HepG2 (cell line): ENCODE measurements at regions of chr12 and their contacts with region 1.

Region 1: DNA sequence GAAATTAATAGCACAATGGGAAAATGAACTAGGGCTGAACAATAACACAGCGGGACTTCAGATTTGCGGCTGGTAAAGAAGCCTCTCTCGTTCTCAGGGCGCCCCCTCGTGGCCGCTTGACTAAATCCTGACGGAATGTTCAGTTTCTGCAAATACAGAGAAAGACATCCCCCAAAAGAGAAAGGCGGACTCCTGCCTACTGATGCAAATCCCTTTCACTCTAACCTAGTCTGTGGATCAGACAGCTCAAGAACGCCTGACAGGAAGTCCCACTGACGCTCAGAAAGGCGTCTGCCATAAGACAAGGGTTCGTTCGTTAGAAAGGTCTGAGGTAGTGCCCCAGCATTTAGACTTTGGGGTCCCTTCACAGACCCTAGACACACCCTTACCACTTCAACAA is 2.5 kb downstream of the NUAK1 start:
- DNase-seq: peak; percentile 73
- ATAC-seq: no peak
- H3K4me3 ChIP-seq: peak overlapping the region in 1 of 3 experiments; percentile 31; a peak in 3 of 6 replicates
- H3K27ac ChIP-seq: no peak overlapping the region
- H3K4me1 ChIP-seq: peaks cover 79% of the 10 kb centered on the region
- H3K27me3 ChIP-seq: peaks cover 0 to 13% of the 10 kb centered on the region in 2 experiments; a peak in 2 of 5 replicates
- CTCF ChIP-seq: peak; percentile 87
- EP300 ChIP-seq: no peak
- POLR2A ChIP-seq: no peak
- RAD21 ChIP-seq: peak; percentile 89

Region 2: DNA sequence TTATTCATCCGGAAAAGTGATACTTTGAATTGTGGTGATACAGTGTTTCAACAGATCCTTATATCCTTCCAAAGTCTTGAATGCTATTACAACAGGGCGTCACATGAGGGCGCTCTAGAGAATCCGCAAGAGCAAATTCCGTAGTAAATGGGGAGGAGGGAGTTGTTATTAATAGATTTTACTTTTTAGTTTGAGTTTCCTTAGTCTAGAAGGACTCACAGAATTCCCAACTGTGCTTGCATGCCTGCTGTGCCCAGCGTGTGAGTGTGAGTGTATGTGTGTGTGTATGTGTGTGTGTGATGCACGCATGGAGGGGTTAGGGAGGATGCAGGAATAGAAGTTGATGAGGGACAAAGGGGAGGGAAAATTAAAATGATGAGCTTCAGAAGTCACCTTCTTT is 430.5 kb before region 1 on chr12:
- CTCF ChIA-PET with region 1: interaction called, 10 read pairs
- POLR2A ChIA-PET with region 1: no interaction called
- in situ Hi-C with region 1: loop called (anchors 5 kb)
- intact Hi-C with region 1: loop called (anchors 1 kb)
- DNase-seq: peak; percentile 36
- ATAC-seq: no peak
- H3K4me3 ChIP-seq: no peak overlapping the region
- H3K27ac ChIP-seq: no peak overlapping the region
- H3K4me1 ChIP-seq: no peaks in the 10 kb centered on the region
- H3K27me3 ChIP-seq: 0 out of 5 replicates have a peak, but pooled peaks cover 1 to 4% of the 10 kb centered on the region in 2 experiments
- CTCF ChIP-seq: peak; percentile 63
- EP300 ChIP-seq: no peak
- POLR2A ChIP-seq: no peak
- RAD21 ChIP-seq: no peak

Region 3: GRCh38 chr12:106030210-106031175 is 105.8 kb before region 1 on chr12:
- CTCF ChIA-PET with region 1: interaction called, 5 read pairs
- POLR2A ChIA-PET with region 1: no interaction called
- in situ Hi-C with region 1: no loop called
- intact Hi-C with region 1: loop called (anchors 5 kb)
- DNase-seq: no peak
- ATAC-seq: no peak
- H3K4me3 ChIP-seq: no peak overlapping the region
- H3K27ac ChIP-seq: no peak overlapping the region
- H3K4me1 ChIP-seq: peaks cover 13% of the 10 kb centered on the region; the same call in 1 of the 2 replicates
- H3K27me3 ChIP-seq: no peaks in the 10 kb centered on the region
- CTCF ChIP-seq: no peak
- EP300 ChIP-seq: no peak
- POLR2A ChIP-seq: no peak
- RAD21 ChIP-seq: no peak

Region 4: DNA sequence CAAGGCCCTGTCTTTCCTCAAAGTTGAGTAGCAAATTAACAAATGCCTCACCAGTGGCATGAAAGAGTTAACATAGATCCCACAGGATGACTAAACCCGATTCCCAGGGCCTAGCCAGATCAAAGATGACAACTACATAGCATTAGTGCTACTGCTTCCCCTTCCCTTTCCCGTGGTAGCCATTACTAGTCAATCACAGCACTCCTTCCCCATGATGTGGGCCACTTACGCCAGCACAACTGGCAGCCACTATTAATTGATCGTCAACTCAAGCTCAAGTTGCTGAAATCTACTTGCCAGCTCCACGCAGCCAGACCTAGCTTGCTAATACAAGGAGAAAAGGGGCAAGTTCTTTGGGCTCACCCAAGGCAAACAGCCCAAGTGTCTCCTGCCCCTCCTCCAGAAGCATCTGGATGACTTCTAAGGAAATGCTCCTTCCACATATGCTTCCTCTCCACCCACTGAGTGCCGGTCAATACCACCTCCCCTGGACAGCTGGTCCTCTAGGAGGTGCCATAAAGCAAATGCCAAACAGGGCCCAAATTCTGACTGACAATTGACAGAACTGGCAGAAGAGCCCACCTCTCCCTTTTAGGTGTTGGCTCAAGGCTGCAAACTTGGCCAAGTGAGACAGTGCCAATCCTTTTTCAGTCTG is 70.1 kb before region 1 on chr12:
- CTCF ChIA-PET with region 1: no interaction called
- POLR2A ChIA-PET with region 1: no interaction called
- in situ Hi-C with region 1: no loop called
- intact Hi-C with region 1: no loop called
- DNase-seq: no peak
- ATAC-seq: no peak
- H3K4me3 ChIP-seq: no peak overlapping the region
- H3K27ac ChIP-seq: no peak overlapping the region
- H3K4me1 ChIP-seq: no peaks in the 10 kb centered on the region
- H3K27me3 ChIP-seq: no peaks in the 10 kb centered on the region
- CTCF ChIP-seq: no peak
- EP300 ChIP-seq: no peak
- POLR2A ChIP-seq: no peak
- RAD21 ChIP-seq: no peak

Region 5: DNA sequence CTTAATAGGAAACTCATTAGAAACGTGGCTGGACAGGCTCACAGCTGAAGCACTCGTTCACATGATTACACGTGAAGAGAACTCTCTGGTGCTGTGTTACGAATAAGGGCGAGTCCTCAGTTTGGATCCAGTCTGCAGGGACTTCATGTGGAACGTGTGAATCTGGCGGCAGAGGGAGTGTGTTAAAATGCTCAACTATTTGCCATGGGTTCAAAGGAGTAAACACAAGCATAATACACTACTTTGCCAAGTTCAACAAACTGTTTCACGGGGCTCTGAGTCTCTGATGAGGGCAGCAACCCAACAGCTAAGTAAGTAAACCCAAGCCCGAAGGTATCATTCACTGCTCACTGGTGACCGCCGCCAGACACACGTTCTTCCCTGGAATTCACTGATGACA is 39.9 kb before region 1 on chr12:
- CTCF ChIA-PET with region 1: no interaction called
- POLR2A ChIA-PET with region 1: interaction called, 10 read pairs
- in situ Hi-C with region 1: no loop called
- intact Hi-C with region 1: loop called (anchors 2 kb)
- DNase-seq: no peak
- ATAC-seq: no peak
- H3K4me3 ChIP-seq: no peak overlapping the region
- H3K27ac ChIP-seq: no peak overlapping the region
- H3K4me1 ChIP-seq: peaks cover 84% of the 10 kb centered on the region
- H3K27me3 ChIP-seq: no peaks in the 10 kb centered on the region
- CTCF ChIP-seq: no peak
- EP300 ChIP-seq: no peak
- POLR2A ChIP-seq: no peak
- RAD21 ChIP-seq: no peak